Panc1 (cell line): ENCODE measurements at regions of chr6 and their contacts with region 1.

Region 1: DNA sequence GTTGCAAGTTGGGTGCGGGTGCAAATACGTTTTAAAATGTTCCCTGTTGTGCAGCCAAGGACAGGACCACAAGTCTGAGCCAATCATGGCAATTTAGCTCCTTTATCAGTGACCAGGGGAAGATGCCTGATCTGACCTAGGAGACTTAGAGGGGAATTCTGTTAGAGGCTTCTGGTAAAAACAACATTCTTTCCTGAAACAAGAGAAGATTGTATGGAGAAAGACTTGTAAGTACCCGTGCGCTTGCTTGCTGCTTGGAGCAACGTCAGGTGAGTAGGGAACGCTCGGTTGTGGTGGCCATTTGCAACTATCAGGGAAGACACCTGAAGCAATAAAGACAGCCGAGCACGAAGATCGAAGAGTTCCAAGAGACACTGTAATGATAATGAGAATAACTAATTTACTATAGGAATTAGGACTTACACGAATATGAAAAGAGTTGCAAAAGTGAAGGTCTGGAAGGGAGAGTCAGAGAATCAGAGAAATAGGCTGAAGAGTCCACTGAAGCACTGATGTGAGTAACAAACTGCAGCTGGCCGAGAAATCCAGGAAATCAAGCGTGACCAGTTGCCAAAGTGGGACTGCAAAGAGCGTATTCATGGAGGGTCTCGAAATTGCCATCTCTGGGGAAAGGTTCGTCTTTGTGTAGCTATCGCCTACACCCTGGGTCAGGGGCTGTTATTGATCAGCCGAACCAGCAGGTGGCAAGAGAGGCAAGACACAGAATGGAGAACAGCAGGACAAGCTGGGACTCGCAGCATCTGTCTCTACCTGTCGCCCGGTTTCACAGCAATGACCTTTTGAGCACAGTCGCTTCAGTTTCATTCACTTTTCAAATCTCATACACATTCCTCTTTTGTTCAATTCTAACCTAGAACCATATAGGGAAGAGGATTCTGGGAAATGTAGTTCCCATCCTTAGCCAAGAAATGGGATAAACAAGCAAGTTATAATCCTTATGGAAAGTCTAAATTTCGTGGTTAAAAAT is 26.1 kb downstream of the LOC128125822 start:
- DNase-seq: peak; percentile 77
- ATAC-seq: peak; percentile 97
- H3K4me3 ChIP-seq: peak overlapping the region; percentile 51 to 81
- H3K27ac ChIP-seq: no peak overlapping the region
- H3K4me1 ChIP-seq: peaks cover 6% of the 10 kb centered on the region; the same call in 1 of the 2 replicates
- H3K27me3 ChIP-seq: no peaks in the 10 kb centered on the region
- CTCF ChIP-seq: peak; percentile 97

Region 2: DNA sequence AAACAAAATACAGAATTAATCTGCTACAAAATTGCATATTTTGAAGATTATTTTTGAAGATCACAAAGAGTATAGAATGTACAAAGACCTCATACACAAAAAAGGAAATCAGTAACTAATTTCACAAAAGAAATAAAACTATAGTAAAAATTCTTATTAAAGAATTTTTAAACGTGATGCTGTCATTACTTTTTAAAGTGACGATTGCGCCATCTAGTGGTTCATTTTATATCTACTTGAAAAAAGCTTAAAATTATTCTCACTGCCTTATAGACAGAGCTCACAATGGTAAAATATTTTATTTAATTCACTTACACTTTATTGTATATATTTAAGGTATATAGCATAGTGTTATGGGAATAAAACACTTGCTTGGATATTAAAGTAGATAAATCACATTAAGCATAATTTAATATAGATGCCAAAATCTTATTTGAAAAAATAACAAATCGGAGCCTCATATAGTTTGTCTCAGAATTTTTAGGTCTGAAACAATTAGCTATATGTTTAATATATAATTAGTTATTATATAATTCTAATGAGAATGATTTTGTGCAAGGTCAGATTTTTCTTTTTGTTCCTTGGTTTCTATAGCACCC is 166.1 kb after region 1 on chr6:
- CTCF ChIA-PET with region 1: interaction called, 20 read pairs
- POLR2A ChIA-PET with region 1: no interaction called
- in situ Hi-C with region 1: no loop called
- intact Hi-C with region 1: loop called (anchors 2 kb)
- DNase-seq: peak; percentile 10
- ATAC-seq: no peak
- H3K4me3 ChIP-seq: no peak overlapping the region
- H3K27ac ChIP-seq: no peak overlapping the region
- H3K4me1 ChIP-seq: no peaks in the 10 kb centered on the region
- H3K27me3 ChIP-seq: peaks cover 2% of the 10 kb centered on the region; the same call in 1 of the 2 replicates
- CTCF ChIP-seq: no peak; the same call in 1 of the 2 replicates

Region 3: GRCh38 chr6:63795006-63795405 is 196.7 kb after region 1 on chr6:
- CTCF ChIA-PET with region 1: no interaction called
- POLR2A ChIA-PET with region 1: no interaction called
- in situ Hi-C with region 1: no loop called
- intact Hi-C with region 1: no loop called
- DNase-seq: no peak
- ATAC-seq: no peak
- H3K4me3 ChIP-seq: no peak overlapping the region
- H3K27ac ChIP-seq: no peak overlapping the region
- H3K4me1 ChIP-seq: no peaks in the 10 kb centered on the region
- H3K27me3 ChIP-seq: peaks cover 4% of the 10 kb centered on the region; the same call in 1 of the 2 replicates
- CTCF ChIP-seq: no peak